Activated naive CD4-positive, alpha-beta T cell treated with anti-CD3 and anti-CD28 coated beads for 36 hours (primary cell): ENCODE measurements at regions of chr5 and their contacts with region 1.

Region 1: GRCh38 chr5:43313035-43313853 is at the start of gene HMGCS1:
- DNase-seq: peak; percentile 100
- H3K4me3 Mint-ChIP-seq: peak within 1 kb of the TSS; percentile 99
- H3K27ac Mint-ChIP-seq: peak within 1 kb of the TSS; percentile 98
- H3K4me1 Mint-ChIP-seq: peaks cover 75% of the 10 kb centered on the region
- H3K27me3 Mint-ChIP-seq: no peaks in the 10 kb centered on the region
- total RNA-seq, gene HMGCS1: 105 TPM

Region 2: GRCh38 chr5:42994246-42995151 is 318.7 kb before region 1 on chr5:
- CTCF ChIA-PET with region 1: interaction called, 3 read pairs
- intact Hi-C with region 1: loop called (anchors 1 kb)
- DNase-seq: peak; percentile 94
- H3K4me3 Mint-ChIP-seq: peak overlapping the region; percentile 99
- H3K27ac Mint-ChIP-seq: peak overlapping the region; percentile 100
- H3K4me1 Mint-ChIP-seq: peaks cover 17% of the 10 kb centered on the region
- H3K27me3 Mint-ChIP-seq: no peaks in the 10 kb centered on the region

Region 3: GRCh38 chr5:43066799-43067741 is 246.2 kb before region 1 on chr5:
- CTCF ChIA-PET with region 1: interaction called, 5 read pairs
- intact Hi-C with region 1: loop called (anchors 1 kb)
- DNase-seq: peak; percentile 92
- H3K4me3 Mint-ChIP-seq: peak overlapping the region; percentile 98
- H3K27ac Mint-ChIP-seq: peak overlapping the region; percentile 98
- H3K4me1 Mint-ChIP-seq: peaks cover 36% of the 10 kb centered on the region
- H3K27me3 Mint-ChIP-seq: no peaks in the 10 kb centered on the region

Region 4: GRCh38 chr5:43191740-43192557 is 121.3 kb before region 1 on chr5 and contains the start of gene NIM1K:
- CTCF ChIA-PET with region 1: no interaction called
- intact Hi-C with region 1: loop called (anchors 1 kb)
- DNase-seq: peak; percentile 60
- H3K4me3 Mint-ChIP-seq: peak within 1 kb of the TSS; percentile 72
- H3K27ac Mint-ChIP-seq: no peak within 1 kb of the TSS
- H3K4me1 Mint-ChIP-seq: peaks cover 31% of the 10 kb centered on the region
- H3K27me3 Mint-ChIP-seq: peaks cover 20% of the 10 kb centered on the region
- total RNA-seq, gene NIM1K: 0.54 to 0.57 TPM

Region 5: GRCh38 chr5:43396762-43397304 is 83.6 kb after region 1 on chr5:
- CTCF ChIA-PET with region 1: no interaction called
- intact Hi-C with region 1: loop called (anchors 1 kb)
- DNase-seq: peak; percentile 75
- H3K4me3 Mint-ChIP-seq: peak overlapping the region; percentile 88
- H3K27ac Mint-ChIP-seq: peak overlapping the region; percentile 87
- H3K4me1 Mint-ChIP-seq: peaks cover 32% of the 10 kb centered on the region
- H3K27me3 Mint-ChIP-seq: no peaks in the 10 kb centered on the region

Region 6: DNA sequence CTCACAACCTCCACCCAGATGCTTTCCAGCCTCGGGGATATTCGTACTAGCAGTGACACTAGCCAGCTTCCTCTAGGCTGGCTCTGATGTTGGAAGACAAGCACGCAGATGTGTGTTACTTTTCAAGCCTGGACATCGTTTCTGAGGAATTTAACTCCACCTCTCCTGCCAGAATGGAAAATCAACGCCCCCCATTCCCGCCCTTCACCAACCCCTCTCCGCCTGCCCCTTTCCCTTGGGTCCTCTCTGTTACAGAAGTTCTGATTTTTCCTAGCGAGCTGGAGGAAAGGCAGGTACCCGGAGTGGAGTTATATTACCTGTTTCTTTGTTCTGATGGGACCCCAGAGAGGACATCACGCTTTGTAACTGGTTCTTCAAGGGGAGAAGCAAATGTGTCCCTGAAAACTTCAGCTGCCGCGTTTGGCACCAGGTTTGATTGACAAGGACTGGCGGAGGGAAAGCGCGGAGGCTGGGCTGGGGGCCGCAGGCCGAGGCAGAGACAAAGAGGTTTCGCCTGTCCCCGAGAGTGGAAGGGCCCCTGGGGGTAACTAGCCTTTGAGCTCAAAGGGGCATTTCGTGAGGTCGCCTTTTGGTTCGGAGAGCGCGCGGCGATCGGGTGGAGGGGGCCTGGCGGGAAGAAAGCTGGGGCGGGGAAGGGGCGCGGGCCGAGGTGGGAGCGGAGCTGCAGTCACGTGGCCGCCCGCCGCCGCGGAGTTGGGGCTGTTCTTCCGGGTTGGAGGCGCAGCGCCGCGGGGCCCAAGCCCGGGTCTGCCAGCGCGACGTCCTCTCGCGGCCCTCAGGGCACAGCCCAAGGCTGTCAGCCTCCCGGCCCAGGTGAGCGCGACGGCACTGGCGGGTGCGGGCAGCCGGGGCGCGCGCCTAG is 289.5 kb after region 1 on chr5 and contains the start of gene NNT:
- CTCF ChIA-PET with region 1: no interaction called
- intact Hi-C with region 1: loop called (anchors 2 kb)
- DNase-seq: peak; percentile 74
- H3K4me3 Mint-ChIP-seq: peak within 1 kb of the TSS; percentile 87
- H3K27ac Mint-ChIP-seq: peak within 1 kb of the TSS; percentile 92
- H3K4me1 Mint-ChIP-seq: peaks cover 45% of the 10 kb centered on the region
- H3K27me3 Mint-ChIP-seq: no peaks in the 10 kb centered on the region
- total RNA-seq, gene NNT: 98.4 to 98.9 TPM